Activated CD4-positive, alpha-beta T cell treated with anti-CD3 and anti-CD28 coated beads for 36 hours (primary cell): ENCODE measurements at regions of chr9 and their contacts with region 1.

Region 1: GRCh38 chr9:86891091-86891490 is 56.2 kb downstream of the GAS1 start:
- DNase-seq: no peak
- ATAC-seq: no peak
- H3K4me3 Mint-ChIP-seq: no peak overlapping the region
- H3K27ac Mint-ChIP-seq: no peak overlapping the region
- H3K4me1 Mint-ChIP-seq: no peaks in the 10 kb centered on the region
- H3K27me3 Mint-ChIP-seq: peaks cover 9% of the 10 kb centered on the region

Region 2: GRCh38 chr9:86860006-86860405 is 31.1 kb before region 1 on chr9:
- CTCF ChIA-PET with region 1: no interaction called
- POLR2A ChIA-PET with region 1: interaction called, 11 read pairs
- intact Hi-C with region 1: no loop called
- DNase-seq: no peak
- ATAC-seq: no peak
- H3K4me3 Mint-ChIP-seq: no peak overlapping the region
- H3K27ac Mint-ChIP-seq: no peak overlapping the region
- H3K4me1 Mint-ChIP-seq: no peaks in the 10 kb centered on the region
- H3K27me3 Mint-ChIP-seq: peaks cover 11% of the 10 kb centered on the region